ENCODE measurements at regions of chr12 and their contacts with region 1.

Region 1: DNA sequence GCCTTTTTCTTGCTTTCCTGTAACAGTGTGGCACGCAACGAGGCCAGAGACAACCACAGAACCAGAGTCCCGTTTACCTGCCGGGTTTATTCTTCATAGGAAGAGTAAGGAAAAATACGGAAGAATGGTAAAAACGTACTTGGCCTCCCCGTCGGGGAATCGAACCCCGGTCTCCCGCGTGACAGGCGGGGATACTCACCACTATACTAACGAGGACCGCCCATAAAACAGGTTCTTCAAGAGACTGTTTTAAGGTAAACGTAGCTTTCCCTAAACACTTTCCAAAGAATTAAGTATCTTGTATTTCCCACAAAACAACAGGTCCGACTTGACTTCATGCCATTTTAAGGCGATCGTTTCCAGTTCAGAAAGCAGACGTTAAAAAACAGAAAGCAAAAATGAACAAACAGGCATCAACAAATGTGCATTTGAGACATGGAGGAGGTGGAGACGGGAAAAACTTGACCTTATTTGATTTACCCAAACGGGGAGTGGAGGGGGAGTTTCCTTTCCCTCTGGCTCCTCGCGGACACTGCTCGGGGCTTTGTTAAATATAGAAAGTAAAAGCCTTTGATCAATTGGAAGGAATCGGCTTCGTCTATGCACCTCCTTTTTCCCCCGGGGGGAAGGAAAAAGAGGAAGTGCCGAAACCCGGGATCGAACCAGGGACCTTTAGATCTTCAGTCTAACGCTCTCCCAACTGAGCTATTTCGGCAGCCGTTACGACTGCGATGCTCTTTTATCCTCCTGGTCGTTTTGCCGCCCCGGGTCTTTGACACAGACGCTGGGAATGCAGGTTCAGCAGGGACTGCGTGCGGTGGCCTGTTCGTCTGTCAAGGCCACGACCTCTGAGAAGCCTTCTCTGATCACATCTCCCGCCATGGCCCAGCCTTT is 13.0 kb upstream of the UBC start:
- DNase-seq: peak; percentile 91

Region 2: DNA sequence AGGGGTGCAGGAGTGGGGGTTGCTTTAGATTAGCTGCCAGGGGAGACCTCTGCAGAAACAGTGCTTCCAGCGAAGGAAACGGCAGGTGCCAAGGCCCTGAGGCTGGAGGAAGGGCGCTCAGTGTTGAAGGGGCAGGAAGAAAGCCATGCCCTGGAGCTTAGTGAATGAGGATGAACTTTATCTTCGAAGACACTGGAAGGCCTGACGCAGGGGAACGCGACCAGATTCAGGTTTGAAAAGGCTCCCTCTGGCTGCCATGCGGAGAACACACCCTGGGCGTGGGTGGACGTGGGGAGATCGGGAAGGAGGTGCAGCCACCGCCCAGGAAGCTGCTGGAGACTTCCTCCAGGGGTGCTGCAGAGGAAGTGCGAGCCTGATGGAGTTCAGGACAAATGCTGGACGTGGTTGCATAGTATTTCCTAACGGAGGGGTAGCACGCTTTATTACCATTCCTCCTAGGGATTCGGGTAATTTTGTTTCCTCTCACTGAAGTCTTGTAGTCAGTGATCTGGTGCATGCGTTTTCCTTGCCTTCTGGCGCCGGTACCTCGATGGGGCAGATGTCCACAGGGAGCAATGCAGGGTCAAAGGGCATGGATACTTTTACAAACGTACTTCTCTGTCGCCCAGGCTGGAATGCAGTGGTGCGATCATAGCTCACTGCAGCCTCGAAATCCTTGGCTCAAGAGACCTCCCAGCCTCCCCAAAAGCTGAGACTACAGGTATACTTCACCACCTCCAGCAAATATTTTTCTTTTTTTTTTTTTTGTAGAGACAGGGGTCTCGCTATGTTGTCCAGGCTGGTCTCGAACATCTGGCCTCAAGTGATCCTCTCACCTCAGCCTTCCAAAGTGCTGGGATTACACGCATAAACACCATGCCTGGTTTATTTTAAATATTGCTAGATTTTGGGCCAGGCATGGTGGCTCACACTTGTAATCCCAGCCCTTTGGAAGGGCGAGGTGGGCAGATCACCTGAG is 13.4 kb after region 1 on chr12:
- intact Hi-C with region 1: loop called (anchors 1 kb)
- DNase-seq: peak; percentile 96

Region 3: GRCh38 chr12:124964836-124965462 is 37.5 kb after region 1 on chr12:
- intact Hi-C with region 1: no loop called
- DNase-seq: no peak